GM10248 (cell line): ENCODE measurements at regions of chr9 and their contacts with region 1.

Region 1: GRCh38 chr9:69012696-69013381 is 1.1 kb downstream of the PRKACG start:
- DNase-seq: peak; percentile 31
- CTCF ChIP-seq: no peak

Region 2: DNA sequence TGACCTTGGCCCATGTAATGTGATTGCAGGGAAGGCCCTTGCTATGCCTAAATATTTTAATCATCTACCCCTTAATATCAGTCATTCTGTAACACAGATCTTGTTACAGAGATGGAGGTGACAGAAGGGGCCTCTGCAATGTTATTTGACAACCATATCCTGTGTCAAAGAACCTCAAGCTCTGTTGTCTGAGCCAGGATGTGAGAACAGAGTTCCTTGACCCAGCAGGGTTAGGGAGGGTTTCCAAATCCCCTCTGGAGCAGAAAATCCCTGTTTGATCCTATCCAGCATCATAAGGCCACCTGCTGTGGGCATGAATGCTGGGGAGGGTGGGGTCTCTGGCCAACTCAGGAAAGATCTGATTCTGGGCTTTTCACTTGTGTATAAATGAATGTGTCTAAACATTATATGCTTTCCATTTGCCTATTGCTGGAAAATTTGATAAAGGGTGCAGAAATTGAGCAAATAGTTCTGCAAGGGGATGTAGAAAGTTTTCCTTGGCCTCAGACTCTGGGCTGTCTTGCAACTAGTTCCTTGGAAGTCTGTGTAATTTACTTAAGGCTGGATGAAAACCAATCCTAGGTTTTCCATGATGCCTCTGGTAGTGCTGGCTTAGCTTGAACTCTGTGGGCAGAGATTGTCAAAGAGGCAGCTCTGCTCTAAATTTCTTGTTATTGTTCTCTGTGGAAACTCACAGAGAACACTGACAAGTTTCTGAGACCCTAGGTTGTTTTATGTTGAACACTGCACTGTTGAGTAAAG is 585.4 kb before region 1 on chr9:
- CTCF ChIA-PET with region 1: no interaction called
- POLR2A ChIA-PET with region 1: no interaction called
- DNase-seq: no peak
- CTCF ChIP-seq: no peak

Region 3: DNA sequence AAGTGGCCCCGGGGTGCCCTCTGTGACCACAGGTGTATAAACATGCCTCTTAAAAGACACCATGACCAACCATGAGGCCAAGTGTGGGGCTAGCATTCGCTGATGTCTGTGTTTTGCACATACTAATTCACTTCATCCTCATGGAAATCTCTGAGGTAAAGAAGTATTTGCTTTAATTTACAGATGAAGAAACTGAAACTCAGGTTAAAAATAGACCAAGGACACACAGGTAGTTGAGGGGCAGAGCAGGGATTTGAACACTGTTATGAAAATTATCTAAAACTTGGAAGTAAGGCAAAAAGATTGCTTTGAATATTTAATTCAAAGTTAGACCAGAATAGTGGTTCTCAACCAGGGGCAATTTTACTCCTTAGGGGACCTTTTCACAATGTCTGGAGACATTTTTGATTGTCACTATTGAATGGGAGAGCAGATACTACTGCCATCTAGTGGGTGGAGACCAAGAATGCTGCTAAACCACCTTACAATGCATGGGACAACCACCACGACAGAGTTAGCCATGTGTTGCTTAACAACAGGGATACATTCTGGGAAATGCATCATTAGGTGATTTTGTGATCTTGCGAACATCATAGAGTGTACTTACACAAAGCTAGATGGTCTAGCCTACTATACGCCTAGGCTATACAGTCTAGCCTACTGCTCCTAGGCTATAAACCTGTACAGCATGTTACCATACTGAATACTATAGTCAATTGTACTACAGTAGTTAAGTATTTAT is 14.7 kb after region 1 on chr9:
- CTCF ChIA-PET with region 1: interaction called, 17 read pairs
- POLR2A ChIA-PET with region 1: no interaction called
- DNase-seq: peak; percentile 66
- CTCF ChIP-seq: peak; percentile 80

Region 4: GRCh38 chr9:69035438-69036308 is 22.8 kb after region 1 on chr9 and contains the start of gene FXN:
- CTCF ChIA-PET with region 1: interaction called, 11 read pairs
- POLR2A ChIA-PET with region 1: no interaction called
- DNase-seq: peak; percentile 93
- CTCF ChIP-seq: peak; percentile 98